ENCODE measurements at regions of chr7 and their contacts with region 1.

Region 1: GRCh38 chr7:32298408-32299132 is 191.6 kb downstream of the LSM5 start:
- DNase-seq: peak; percentile 25 to 72 (median 70)
- ATAC-seq: peak; percentile 70 to 72
- H3K4me3 ChIP-seq: peak overlapping the region; percentile 59
- H3K27ac ChIP-seq: no peak overlapping the region
- H3K4me1 ChIP-seq: no peaks in the 10 kb centered on the region
- H3K27me3 ChIP-seq: peaks cover 2% of the 10 kb centered on the region

Region 2: DNA sequence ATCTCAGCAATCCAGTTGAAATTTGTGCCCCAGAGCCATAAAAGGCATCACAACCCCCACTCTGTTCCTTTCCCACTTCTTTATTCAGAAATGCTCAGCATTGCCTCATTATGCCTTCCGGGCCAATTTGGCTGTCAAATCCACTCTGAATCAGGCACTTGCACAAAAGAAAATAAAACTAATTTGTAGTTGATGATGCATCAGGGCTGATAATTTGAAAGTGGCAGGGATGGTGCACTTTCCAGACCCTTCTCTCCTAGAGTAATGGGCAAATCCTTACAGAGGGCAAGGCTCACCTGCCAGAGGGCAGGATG is 80.5 kb before region 1 on chr7:
- intact Hi-C with region 1: loop called in 1 of 4 experiments (anchors 10 kb)
- DNase-seq: peak in 2 of 3 donors; percentile 26 to 63
- ATAC-seq: peak; percentile 73 to 85
- H3K4me3 ChIP-seq: no peak overlapping the region
- H3K27ac ChIP-seq: no peak overlapping the region
- H3K4me1 ChIP-seq: peaks cover 3% of the 10 kb centered on the region
- H3K27me3 ChIP-seq: no peaks in the 10 kb centered on the region

Measured in right cardiac atrium (tissue), 5 donors.